ENCODE measurements at regions of chr15 and their contacts with region 1.

Region 1: DNA sequence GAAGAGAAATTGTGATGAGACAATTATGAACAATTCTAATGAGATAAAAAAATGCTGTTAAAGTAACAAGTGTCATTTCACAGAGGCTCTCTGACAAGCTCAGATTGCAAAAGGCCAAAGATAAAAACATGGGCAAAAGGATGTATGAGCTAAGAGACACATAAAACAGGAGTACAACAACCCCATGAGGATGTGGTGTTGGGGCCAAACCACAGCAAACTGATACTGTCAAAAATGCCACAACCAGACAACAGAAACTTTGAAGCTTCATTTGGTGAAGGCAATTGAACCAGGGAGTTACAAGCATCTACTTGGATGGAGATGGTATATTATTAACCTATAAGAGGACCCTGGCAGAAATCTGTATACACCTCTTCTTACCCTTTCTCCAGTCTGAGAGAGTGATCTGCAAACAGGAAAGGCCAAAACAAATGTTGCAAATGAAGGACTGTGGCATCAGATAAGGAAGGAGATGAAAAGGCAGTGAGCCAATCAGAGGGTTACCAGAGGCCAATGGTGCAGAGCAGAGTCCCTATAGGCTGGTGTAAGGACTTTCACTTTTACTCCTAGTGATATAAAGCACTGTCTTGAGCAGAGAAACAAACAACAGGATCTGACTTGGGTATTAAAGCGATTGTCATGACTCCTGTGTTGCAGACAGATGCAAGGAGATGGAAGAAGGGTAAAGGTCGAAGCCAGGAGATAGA is 659.0 kb downstream of the NTRK3 start:
- DNase-seq: no peak

Region 2: GRCh38 chr15:87450314-87450713 is 147.2 kb before region 1 on chr15:
- in situ Hi-C with region 1: no loop called
- DNase-seq: no peak

Region 3: GRCh38 chr15:87537295-87537694 is 60.2 kb before region 1 on chr15:
- in situ Hi-C with region 1: loop called (anchors 10 kb)
- DNase-seq: no peak